ENCODE measurements at regions of chr7 and their contacts with region 1.

Region 1: DNA sequence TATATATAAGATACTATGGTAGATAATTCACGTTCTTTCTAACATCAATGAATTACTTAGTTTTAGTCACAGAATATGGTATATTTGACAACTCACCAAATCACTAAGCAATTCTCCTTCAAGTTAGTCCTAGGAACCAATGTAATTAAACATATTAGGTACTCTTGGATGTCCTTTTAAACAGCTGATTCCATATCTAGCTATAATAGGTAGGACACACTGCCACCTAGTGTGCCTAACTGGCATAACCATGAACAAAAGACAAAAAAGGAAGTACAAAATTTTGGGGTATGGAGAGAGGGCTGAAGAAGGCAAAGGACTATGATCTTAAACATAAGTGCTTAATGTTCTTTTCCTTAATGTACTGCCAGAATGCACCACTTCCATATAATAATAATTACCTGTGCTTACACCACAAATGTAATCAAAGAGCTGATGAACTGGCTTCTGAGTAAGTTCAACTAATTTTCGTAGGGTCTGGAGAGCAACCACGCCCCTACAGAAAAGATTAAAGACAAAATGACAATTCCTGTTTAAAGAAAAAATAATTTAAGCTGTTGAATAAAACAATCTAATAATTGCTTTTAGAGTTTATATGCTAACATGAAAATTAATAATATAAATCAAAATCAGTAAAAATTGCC is 28.7 kb downstream of the PNPLA8 start:
- DNase-seq: peak; percentile 66
- H3K4me3 ChIP-seq: no peak overlapping the region; a peak in 1 of 4 replicates
- H3K27ac ChIP-seq: no peak overlapping the region
- H3K4me1 ChIP-seq: no peaks in the 10 kb centered on the region
- H3K27me3 ChIP-seq: no peaks in the 10 kb centered on the region
- CTCF ChIP-seq: peak; percentile 99
- EP300 ChIP-seq: no peak
- RAD21 ChIP-seq: peak; percentile 96

Region 2: GRCh38 chr7:108171151-108171550 is 326.1 kb before region 1 on chr7:
- CTCF ChIA-PET with region 1: interaction called, 24 read pairs
- POLR2A ChIA-PET with region 1: no interaction called
- DNase-seq: no peak
- H3K4me3 ChIP-seq: no peak overlapping the region
- H3K27ac ChIP-seq: no peak overlapping the region
- H3K4me1 ChIP-seq: no peaks in the 10 kb centered on the region
- H3K27me3 ChIP-seq: no peaks in the 10 kb centered on the region; the same call in 1 of the 2 replicates
- CTCF ChIP-seq: no peak
- EP300 ChIP-seq: no peak
- RAD21 ChIP-seq: no peak

Region 3: GRCh38 chr7:108236681-108237415 is 260.4 kb before region 1 on chr7:
- CTCF ChIA-PET with region 1: interaction called, 13 read pairs
- POLR2A ChIA-PET with region 1: interaction called, 3 read pairs
- DNase-seq: no peak
- H3K4me3 ChIP-seq: no peak overlapping the region
- H3K27ac ChIP-seq: peak overlapping the region in 1 of 2 experiments; percentile 86; a peak in 1 of 4 replicates
- H3K4me1 ChIP-seq: peaks cover 27 to 47% of the 10 kb centered on the region in 2 experiments; a peak in 3 of 4 replicates
- H3K27me3 ChIP-seq: no peaks in the 10 kb centered on the region
- CTCF ChIP-seq: no peak
- EP300 ChIP-seq: no peak
- RAD21 ChIP-seq: no peak

Region 4: GRCh38 chr7:108459931-108460551 is 37.2 kb before region 1 on chr7:
- CTCF ChIA-PET with region 1: interaction called, 53 read pairs
- POLR2A ChIA-PET with region 1: interaction called, 3 read pairs
- DNase-seq: peak; percentile 66
- H3K4me3 ChIP-seq: no peak overlapping the region
- H3K27ac ChIP-seq: peak overlapping the region in 1 of 2 experiments; percentile 8; a peak in 1 of 4 replicates
- H3K4me1 ChIP-seq: peaks cover 0 to 14% of the 10 kb centered on the region in 2 experiments; a peak in 2 of 4 replicates
- H3K27me3 ChIP-seq: peaks cover 30% of the 10 kb centered on the region
- CTCF ChIP-seq: peak; percentile 75
- EP300 ChIP-seq: no peak; a peak in 1 of 4 replicates
- RAD21 ChIP-seq: peak; percentile 90

Region 5: DNA sequence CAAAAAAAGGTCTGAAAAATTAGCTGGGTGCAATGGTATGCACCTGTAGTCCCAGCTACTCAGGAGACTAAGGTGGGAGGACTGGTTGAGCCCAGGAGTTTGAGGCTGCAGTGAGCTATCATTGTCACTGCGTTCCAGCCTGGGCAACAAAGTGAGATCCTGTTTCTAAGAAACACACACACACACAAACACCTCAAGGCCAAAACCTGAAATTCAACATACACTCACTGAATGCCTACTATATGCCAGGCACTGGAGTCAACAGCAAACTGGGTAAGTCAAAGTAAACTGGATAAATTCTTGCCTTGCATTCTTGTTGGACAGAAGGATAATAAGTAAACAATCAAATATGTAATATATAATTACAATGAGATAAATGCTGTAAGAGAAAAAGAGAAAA is 19.5 kb before region 1 on chr7:
- CTCF ChIA-PET with region 1: interaction called, 33 read pairs
- POLR2A ChIA-PET with region 1: no interaction called
- DNase-seq: no peak
- H3K4me3 ChIP-seq: no peak overlapping the region
- H3K27ac ChIP-seq: no peak overlapping the region
- H3K4me1 ChIP-seq: no peaks in the 10 kb centered on the region
- H3K27me3 ChIP-seq: no peaks in the 10 kb centered on the region
- CTCF ChIP-seq: no peak
- EP300 ChIP-seq: no peak
- RAD21 ChIP-seq: no peak

Region 6: GRCh38 chr7:108511939-108512338 is 14.7 kb after region 1 on chr7:
- CTCF ChIA-PET with region 1: interaction called, 29 read pairs
- POLR2A ChIA-PET with region 1: no interaction called
- DNase-seq: no peak
- H3K4me3 ChIP-seq: no peak overlapping the region
- H3K27ac ChIP-seq: no peak overlapping the region
- H3K4me1 ChIP-seq: no peaks in the 10 kb centered on the region
- H3K27me3 ChIP-seq: no peaks in the 10 kb centered on the region
- CTCF ChIP-seq: no peak
- EP300 ChIP-seq: no peak
- RAD21 ChIP-seq: no peak

Measured in SK-N-SH (cell line).